ENCODE measurements at regions of chr16 and their contacts with region 1.

Region 1: GRCh38 chr16:56519459-56520250 is at the start of gene BBS2:
- DNase-seq: peak; percentile 97
- total RNA-seq, gene BBS2: 30.5 to 36.5 TPM

Region 2: GRCh38 chr16:55638256-55638655 is 881.4 kb before region 1 on chr16:
- intact Hi-C with region 1: no loop called
- DNase-seq: no peak

Region 3: GRCh38 chr16:56493815-56494214 is 25.8 kb before region 1 on chr16:
- intact Hi-C with region 1: loop called in 1 of 2 experiments (anchors 1 kb)
- DNase-seq: no peak

Measured in posterior vena cava (tissue), 2 donors.